ENCODE measurements at regions of chr4 and their contacts with region 1.

Region 1: DNA sequence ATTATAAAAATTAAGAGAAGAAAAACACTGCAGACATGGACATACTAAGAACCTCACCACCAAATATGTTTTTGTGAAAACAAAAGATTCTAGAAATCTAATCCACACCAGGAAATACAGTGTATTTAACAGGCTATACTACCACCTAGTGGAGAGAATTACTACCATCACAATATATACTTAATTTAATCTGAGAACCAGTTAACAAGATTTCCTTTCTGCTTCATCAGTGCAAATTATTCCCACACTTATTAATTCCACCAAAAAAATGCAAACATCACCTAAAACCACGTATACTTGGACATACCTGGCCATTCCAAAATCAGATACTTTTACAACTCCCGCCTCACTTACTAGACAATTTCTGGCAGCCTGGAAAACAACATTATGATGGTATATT is 7.0 kb upstream of the TXK start:
- DNase-seq: peak in 3 of 14 experiments; percentile 72 to 74 (median 73)
- ATAC-seq: peak; percentile 40
- H3K4me3 ChIP-seq: no peak overlapping the region
- H3K4me3 Mint-ChIP-seq: no peak overlapping the region
- H3K27ac ChIP-seq: no peak overlapping the region
- H3K27ac Mint-ChIP-seq: peak overlapping the region; percentile 37
- H3K4me1 ChIP-seq: peaks cover 43% of the 10 kb centered on the region
- H3K4me1 Mint-ChIP-seq: peaks cover 53% of the 10 kb centered on the region
- H3K27me3 ChIP-seq: no peaks in the 10 kb centered on the region
- H3K27me3 Mint-ChIP-seq: no peaks in the 10 kb centered on the region
- CTCF ChIP-seq: peak; percentile 76

Region 2: GRCh38 chr4:47577779-47578553 is 563.1 kb before region 1 on chr4:
- CTCF ChIA-PET with region 1: no interaction called
- POLR2A ChIA-PET with region 1: no interaction called
- intact Hi-C with region 1: no loop called
- DNase-seq: no peak
- ATAC-seq: no peak
- H3K4me3 ChIP-seq: no peak overlapping the region
- H3K4me3 Mint-ChIP-seq: no peak overlapping the region
- H3K27ac ChIP-seq: no peak overlapping the region
- H3K27ac Mint-ChIP-seq: no peak overlapping the region
- H3K4me1 ChIP-seq: no peaks in the 10 kb centered on the region
- H3K4me1 Mint-ChIP-seq: no peaks in the 10 kb centered on the region
- H3K27me3 ChIP-seq: no peaks in the 10 kb centered on the region
- H3K27me3 Mint-ChIP-seq: no peaks in the 10 kb centered on the region
- CTCF ChIP-seq: no peak

Region 3: DNA sequence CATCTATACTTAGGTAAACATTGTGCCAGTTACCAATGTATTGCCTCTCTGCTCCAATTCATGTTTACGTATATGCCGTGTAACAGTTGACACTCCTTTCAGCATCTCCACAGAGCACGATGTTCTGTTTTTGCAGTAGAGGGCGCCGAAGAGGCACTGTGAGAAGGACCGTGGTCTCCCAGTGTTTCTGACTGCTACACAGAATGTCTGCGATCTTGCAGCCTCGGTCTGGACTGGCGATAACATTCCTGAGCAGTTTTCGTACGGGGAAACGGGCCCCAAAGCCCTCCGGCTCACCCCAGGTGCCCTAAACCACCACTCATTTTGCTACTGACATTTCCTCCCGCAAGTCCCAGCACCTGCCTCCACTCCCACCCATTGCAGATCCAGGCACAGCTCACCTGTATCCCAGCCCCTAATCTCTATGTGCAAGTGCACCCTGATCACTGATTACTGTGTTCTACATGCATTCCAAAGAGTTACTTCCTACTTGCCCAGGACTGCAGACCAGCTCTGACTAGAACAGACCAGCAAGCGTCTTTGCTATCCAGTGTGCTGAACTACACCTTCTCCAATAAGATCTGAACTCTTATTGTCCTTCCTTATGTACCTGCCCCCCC is 214.3 kb before region 1 on chr4:
- CTCF ChIA-PET with region 1: no interaction called
- POLR2A ChIA-PET with region 1: no interaction called
- intact Hi-C with region 1: loop called in 1 of 2 experiments (anchors 5 kb)
- DNase-seq: peak; percentile 22 to 72 (median 34)
- ATAC-seq: peak; percentile 98
- H3K4me3 ChIP-seq: no peak overlapping the region
- H3K4me3 Mint-ChIP-seq: peak overlapping the region; percentile 8
- H3K27ac ChIP-seq: no peak overlapping the region
- H3K27ac Mint-ChIP-seq: no peak overlapping the region
- H3K4me1 ChIP-seq: peaks cover 5% of the 10 kb centered on the region
- H3K4me1 Mint-ChIP-seq: peaks cover 13% of the 10 kb centered on the region
- H3K27me3 ChIP-seq: no peaks in the 10 kb centered on the region
- H3K27me3 Mint-ChIP-seq: peaks cover 34% of the 10 kb centered on the region
- CTCF ChIP-seq: peak; percentile 82

Region 4: GRCh38 chr4:48005781-48006180 is 135.3 kb before region 1 on chr4:
- CTCF ChIA-PET with region 1: no interaction called
- POLR2A ChIA-PET with region 1: no interaction called
- intact Hi-C with region 1: no loop called
- DNase-seq: no peak
- ATAC-seq: no peak
- H3K4me3 ChIP-seq: no peak overlapping the region
- H3K4me3 Mint-ChIP-seq: no peak overlapping the region
- H3K27ac ChIP-seq: no peak overlapping the region
- H3K27ac Mint-ChIP-seq: no peak overlapping the region
- H3K4me1 ChIP-seq: no peaks in the 10 kb centered on the region
- H3K4me1 Mint-ChIP-seq: no peaks in the 10 kb centered on the region
- H3K27me3 ChIP-seq: peaks cover 0 to 5% of the 10 kb centered on the region in 2 experiments
- H3K27me3 Mint-ChIP-seq: peaks cover 5% of the 10 kb centered on the region
- CTCF ChIP-seq: no peak

Region 5: GRCh38 chr4:48033825-48034413 is 107.1 kb before region 1 on chr4:
- CTCF ChIA-PET with region 1: interaction called, 5 read pairs
- POLR2A ChIA-PET with region 1: no interaction called
- intact Hi-C with region 1: loop called (anchors 2 kb)
- DNase-seq: peak; percentile 31 to 75 (median 51)
- ATAC-seq: peak; percentile 95
- H3K4me3 ChIP-seq: no peak overlapping the region
- H3K4me3 Mint-ChIP-seq: no peak overlapping the region
- H3K27ac ChIP-seq: no peak overlapping the region
- H3K27ac Mint-ChIP-seq: no peak overlapping the region
- H3K4me1 ChIP-seq: peaks cover 3% of the 10 kb centered on the region
- H3K4me1 Mint-ChIP-seq: peaks cover 5% of the 10 kb centered on the region
- H3K27me3 ChIP-seq: no peaks in the 10 kb centered on the region
- H3K27me3 Mint-ChIP-seq: no peaks in the 10 kb centered on the region
- CTCF ChIP-seq: peak; percentile 84

Region 6: DNA sequence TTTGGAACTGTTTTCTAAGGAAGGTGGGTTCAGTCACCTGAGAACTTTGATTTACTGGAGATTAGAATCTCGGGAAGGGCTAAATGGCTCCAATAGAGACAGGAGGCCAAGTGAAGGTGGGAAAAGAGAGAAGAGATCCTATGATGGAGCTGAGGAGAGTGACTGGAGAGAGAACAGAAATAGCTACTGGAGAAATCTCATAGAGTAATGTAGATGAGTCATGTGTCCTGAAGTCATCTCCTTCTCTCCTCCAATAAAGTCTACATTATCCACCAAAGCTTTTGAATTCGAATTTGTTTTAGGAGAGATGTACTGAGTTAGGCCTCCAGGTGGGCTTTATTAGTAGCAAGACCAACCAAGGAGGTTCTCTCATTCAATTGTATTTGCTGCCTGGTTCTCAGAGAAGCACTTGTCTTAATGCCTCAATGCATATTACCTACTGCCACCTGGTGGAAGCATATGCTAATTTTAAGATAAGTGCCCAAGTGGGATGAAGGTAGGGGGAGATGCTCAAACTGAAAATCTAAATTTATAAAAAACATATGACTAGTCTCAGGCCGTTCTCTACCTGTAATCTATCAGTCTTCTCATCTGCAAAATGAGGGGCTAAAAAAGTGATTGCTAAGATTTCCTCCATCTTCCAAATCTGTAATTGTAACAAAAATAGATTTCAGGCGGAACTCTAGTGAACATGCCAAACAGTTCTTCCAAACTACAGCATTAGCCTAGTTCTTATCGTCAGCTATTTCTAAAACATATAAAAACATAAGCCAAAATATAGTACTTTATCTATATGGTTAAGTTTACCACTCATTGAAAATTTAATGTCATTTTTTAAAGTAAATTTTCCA is 31.4 kb before region 1 on chr4:
- CTCF ChIA-PET with region 1: interaction called, 9 read pairs
- POLR2A ChIA-PET with region 1: interaction called, 12 read pairs
- intact Hi-C with region 1: loop called (anchors 1 to 2 kb)
- DNase-seq: peak in 4 of 14 experiments; percentile 34 to 74 (median 68)
- ATAC-seq: peak; percentile 85
- H3K4me3 ChIP-seq: no peak overlapping the region
- H3K4me3 Mint-ChIP-seq: no peak overlapping the region
- H3K27ac ChIP-seq: no peak overlapping the region
- H3K27ac Mint-ChIP-seq: peak overlapping the region; percentile 70
- H3K4me1 ChIP-seq: peaks cover 5% of the 10 kb centered on the region
- H3K4me1 Mint-ChIP-seq: peaks cover 54% of the 10 kb centered on the region
- H3K27me3 ChIP-seq: no peaks in the 10 kb centered on the region
- H3K27me3 Mint-ChIP-seq: no peaks in the 10 kb centered on the region
- CTCF ChIP-seq: peak; percentile 81

Region 7: DNA sequence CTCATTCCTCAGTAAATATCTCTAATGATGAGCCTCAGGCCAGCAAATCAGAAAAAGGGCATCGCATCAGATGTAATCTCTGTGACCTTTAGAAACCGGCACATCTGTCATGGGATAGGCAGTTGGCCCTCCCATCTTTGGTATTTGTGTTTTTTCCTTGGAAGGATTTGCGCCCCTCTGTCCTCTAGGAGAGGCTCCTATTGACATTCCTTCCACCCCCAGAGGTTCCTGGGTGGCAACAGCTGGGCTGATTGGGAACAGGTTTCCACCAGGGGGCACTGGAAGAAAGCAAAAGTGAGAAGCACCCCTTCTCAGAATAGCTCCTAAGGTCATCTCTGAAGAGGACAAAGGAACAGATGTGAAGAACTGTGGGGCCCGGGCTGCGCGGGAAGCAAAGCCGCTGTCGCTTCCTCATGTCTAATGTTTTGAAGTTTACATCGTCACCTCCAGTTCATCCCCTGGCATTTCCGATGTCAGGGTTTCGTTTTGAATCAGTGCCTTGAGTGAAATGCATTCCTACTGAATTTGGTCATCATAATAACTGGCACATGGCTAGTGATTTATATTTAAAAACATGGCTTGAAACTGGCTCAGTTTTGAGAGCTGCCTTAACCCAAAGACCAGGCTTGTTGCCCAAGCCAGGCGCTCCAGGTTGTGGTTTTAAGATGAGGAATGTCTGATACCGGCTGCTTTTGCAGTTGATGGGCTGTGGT is 13.2 kb before region 1 on chr4:
- CTCF ChIA-PET with region 1: interaction called, 70 read pairs
- POLR2A ChIA-PET with region 1: interaction called, 125 read pairs
- intact Hi-C with region 1: loop called (anchors 1 to 2 kb)
- DNase-seq: peak; percentile 46 to 83 (median 66)
- ATAC-seq: peak; percentile 78
- H3K4me3 ChIP-seq: peak overlapping the region; percentile 33
- H3K4me3 Mint-ChIP-seq: peak overlapping the region; percentile 86
- H3K27ac ChIP-seq: peak overlapping the region; percentile 70 to 80
- H3K27ac Mint-ChIP-seq: peak overlapping the region; percentile 88
- H3K4me1 ChIP-seq: peaks cover 78% of the 10 kb centered on the region
- H3K4me1 Mint-ChIP-seq: peaks cover 87% of the 10 kb centered on the region
- H3K27me3 ChIP-seq: no peaks in the 10 kb centered on the region
- H3K27me3 Mint-ChIP-seq: no peaks in the 10 kb centered on the region
- CTCF ChIP-seq: peak; percentile 61

Region 8: GRCh38 chr4:48190839-48191238 is 49.8 kb after region 1 on chr4:
- CTCF ChIA-PET with region 1: no interaction called
- POLR2A ChIA-PET with region 1: no interaction called
- intact Hi-C with region 1: no loop called
- DNase-seq: no peak
- ATAC-seq: no peak
- H3K4me3 ChIP-seq: no peak overlapping the region
- H3K4me3 Mint-ChIP-seq: no peak overlapping the region
- H3K27ac ChIP-seq: no peak overlapping the region
- H3K27ac Mint-ChIP-seq: no peak overlapping the region
- H3K4me1 ChIP-seq: peaks cover 3% of the 10 kb centered on the region
- H3K4me1 Mint-ChIP-seq: peaks cover 9% of the 10 kb centered on the region
- H3K27me3 ChIP-seq: no peaks in the 10 kb centered on the region
- H3K27me3 Mint-ChIP-seq: no peaks in the 10 kb centered on the region
- CTCF ChIP-seq: no peak

Region 9: GRCh38 chr4:48340965-48341775 is 200.1 kb after region 1 on chr4 and contains the start of gene SLAIN2:
- CTCF ChIA-PET with region 1: interaction called, 4 read pairs
- POLR2A ChIA-PET with region 1: interaction called, 8 read pairs
- intact Hi-C with region 1: loop called (anchors 5 to 10 kb)
- DNase-seq: peak; percentile 92 to 100 (median 98)
- ATAC-seq: peak; percentile 81
- H3K4me3 ChIP-seq: peak within 1 kb of the TSS; percentile 82
- H3K4me3 Mint-ChIP-seq: peak within 1 kb of the TSS; percentile 100
- H3K27ac ChIP-seq: peak within 1 kb of the TSS; percentile 91 to 95
- H3K27ac Mint-ChIP-seq: peak within 1 kb of the TSS; percentile 98
- H3K4me1 ChIP-seq: peaks cover 18% of the 10 kb centered on the region
- H3K4me1 Mint-ChIP-seq: peaks cover 54% of the 10 kb centered on the region
- H3K27me3 ChIP-seq: no peaks in the 10 kb centered on the region
- H3K27me3 Mint-ChIP-seq: no peaks in the 10 kb centered on the region
- CTCF ChIP-seq: peak; percentile 36
- total RNA-seq, gene SLAIN2: 46.3 to 47.0 TPM